Activated CD8-positive, alpha-beta T cell treated with anti-CD3 and anti-CD28 coated beads, Interleukin-2, amount 10 ng/mL, durations not matched to agents 7 days and 5 days (primary cell): ENCODE measurements at regions of chr1 and their contacts with region 1.

Region 1: DNA sequence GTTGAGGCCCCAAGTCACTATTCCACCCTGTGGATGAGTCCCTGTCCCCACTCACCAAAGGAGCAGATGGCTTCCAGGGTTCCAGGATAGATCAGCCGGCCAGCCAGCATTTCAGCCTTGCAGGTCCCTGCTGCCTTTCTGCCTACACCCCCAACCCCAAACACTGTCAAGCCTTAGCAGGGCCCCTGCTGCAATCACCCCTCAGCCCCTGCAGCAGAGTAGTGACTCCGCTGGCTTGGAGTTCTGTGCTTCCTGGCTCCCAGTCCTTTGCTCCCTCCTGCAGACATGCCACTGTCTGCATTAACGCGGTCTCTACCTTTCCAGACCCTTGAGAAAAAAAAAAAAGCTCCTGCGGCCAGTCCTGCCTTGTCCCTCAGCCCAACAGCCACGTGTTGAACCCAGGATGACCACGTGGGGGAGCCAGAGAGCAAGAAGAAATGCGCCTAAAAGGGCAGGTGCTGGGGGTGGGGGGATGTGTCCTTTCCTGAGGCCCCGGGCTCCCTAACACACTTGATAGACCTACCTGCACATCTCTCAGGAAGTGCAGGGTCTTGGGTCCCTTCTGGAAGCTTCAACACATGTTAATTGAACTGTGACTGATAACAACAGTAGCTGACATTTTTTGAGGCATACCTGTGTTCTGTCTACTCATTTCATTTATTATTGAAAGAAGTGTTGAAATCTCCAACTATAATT is 37.4 kb downstream of the RASSF5 start:
- DNase-seq: peak; percentile 85
- ATAC-seq: peak; percentile 81
- H3K4me3 Mint-ChIP-seq: no peak overlapping the region
- H3K27ac Mint-ChIP-seq: peak overlapping the region; percentile 26
- H3K4me1 Mint-ChIP-seq: peaks cover 20% of the 10 kb centered on the region
- H3K27me3 Mint-ChIP-seq: no peaks in the 10 kb centered on the region

Region 2: DNA sequence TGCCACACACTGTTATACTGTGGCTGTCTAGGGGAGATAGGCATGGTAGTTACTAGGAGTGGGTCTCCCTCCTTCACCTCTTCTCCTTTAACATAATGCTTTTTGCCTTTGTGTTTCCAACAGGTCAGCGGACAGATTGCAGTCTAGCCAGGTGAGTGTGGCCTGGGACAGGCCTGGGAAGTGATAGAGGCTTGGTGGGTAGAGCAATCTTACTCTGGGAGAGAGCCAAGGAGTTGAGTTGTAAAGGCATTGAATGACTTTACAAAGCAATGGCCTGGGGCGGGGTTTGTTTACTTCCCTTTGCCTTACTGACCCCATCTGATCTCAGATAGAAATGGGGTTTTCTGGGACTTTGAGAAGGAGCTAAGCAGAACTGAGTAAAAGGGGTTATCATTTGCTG is 125.5 kb before region 1 on chr1:
- CTCF ChIA-PET with region 1: no interaction called
- POLR2A ChIA-PET with region 1: no interaction called
- DNase-seq: no peak
- ATAC-seq: no peak
- H3K4me3 Mint-ChIP-seq: no peak overlapping the region
- H3K27ac Mint-ChIP-seq: no peak overlapping the region
- H3K4me1 Mint-ChIP-seq: no peaks in the 10 kb centered on the region
- H3K27me3 Mint-ChIP-seq: no peaks in the 10 kb centered on the region

Region 3: GRCh38 chr1:206461602-206462455 is 82.9 kb before region 1 on chr1:
- CTCF ChIA-PET with region 1: interaction called, 12 read pairs
- POLR2A ChIA-PET with region 1: no interaction called
- DNase-seq: peak; percentile 88
- ATAC-seq: peak; percentile 73
- H3K4me3 Mint-ChIP-seq: no peak overlapping the region
- H3K27ac Mint-ChIP-seq: no peak overlapping the region
- H3K4me1 Mint-ChIP-seq: peaks cover 43% of the 10 kb centered on the region
- H3K27me3 Mint-ChIP-seq: no peaks in the 10 kb centered on the region

Region 4: GRCh38 chr1:206479183-206480125 is 65.3 kb before region 1 on chr1:
- CTCF ChIA-PET with region 1: interaction called, 10 read pairs
- POLR2A ChIA-PET with region 1: no interaction called
- DNase-seq: peak; percentile 80
- ATAC-seq: peak; percentile 73
- H3K4me3 Mint-ChIP-seq: no peak overlapping the region
- H3K27ac Mint-ChIP-seq: peak overlapping the region; percentile 55
- H3K4me1 Mint-ChIP-seq: peaks cover 18% of the 10 kb centered on the region
- H3K27me3 Mint-ChIP-seq: no peaks in the 10 kb centered on the region

Region 5: GRCh38 chr1:206521694-206522402 is 22.9 kb before region 1 on chr1:
- CTCF ChIA-PET with region 1: interaction called, 13 read pairs
- POLR2A ChIA-PET with region 1: no interaction called
- DNase-seq: no peak
- ATAC-seq: peak; percentile 29
- H3K4me3 Mint-ChIP-seq: no peak overlapping the region
- H3K27ac Mint-ChIP-seq: no peak overlapping the region
- H3K4me1 Mint-ChIP-seq: peaks cover 4% of the 10 kb centered on the region
- H3K27me3 Mint-ChIP-seq: no peaks in the 10 kb centered on the region

Region 6: DNA sequence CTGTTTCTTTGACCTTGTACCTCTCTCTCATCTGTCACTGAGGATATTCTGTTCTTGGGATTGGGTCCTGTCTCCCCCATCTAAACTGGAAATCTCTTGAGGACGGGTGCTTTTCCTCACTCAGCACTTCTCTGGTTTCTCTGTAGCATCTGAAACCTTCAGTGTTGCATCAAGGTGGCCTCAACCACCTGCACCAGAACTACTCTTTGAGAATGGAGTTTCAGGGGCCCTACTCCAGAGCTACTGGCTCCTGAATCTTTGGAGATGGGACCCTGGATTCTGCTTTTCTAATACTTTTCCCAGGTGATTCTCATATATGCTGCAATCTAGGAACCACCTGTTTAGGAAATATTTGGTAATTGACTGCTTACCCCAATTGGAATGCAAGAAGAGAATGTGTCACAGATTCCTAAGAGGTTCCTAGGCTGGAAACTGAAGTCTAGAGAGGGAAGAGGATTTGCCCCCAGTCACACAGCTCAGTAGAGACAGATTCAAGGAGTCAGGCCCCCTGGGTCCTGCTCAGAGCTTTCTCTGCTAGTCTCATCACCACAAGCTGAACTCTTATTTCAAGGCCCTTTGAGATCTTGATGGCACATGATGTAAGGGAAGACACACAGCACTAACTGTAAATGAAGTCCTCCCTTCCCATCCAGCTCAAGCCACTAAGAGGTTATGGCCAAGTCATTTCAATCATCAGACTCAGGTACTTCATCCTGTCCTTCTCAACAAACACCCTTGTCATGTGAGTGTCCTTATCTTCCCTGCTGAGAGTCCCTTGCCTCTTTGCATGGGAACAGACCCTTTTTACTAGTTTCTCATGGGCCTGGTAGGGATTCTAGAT is 18.9 kb after region 1 on chr1:
- CTCF ChIA-PET with region 1: interaction called, 175 read pairs
- POLR2A ChIA-PET with region 1: interaction called, 8 read pairs
- DNase-seq: no peak
- ATAC-seq: peak; percentile 14
- H3K4me3 Mint-ChIP-seq: peak overlapping the region; percentile 62
- H3K27ac Mint-ChIP-seq: peak overlapping the region; percentile 90
- H3K4me1 Mint-ChIP-seq: peaks cover 88% of the 10 kb centered on the region
- H3K27me3 Mint-ChIP-seq: no peaks in the 10 kb centered on the region

Region 7: DNA sequence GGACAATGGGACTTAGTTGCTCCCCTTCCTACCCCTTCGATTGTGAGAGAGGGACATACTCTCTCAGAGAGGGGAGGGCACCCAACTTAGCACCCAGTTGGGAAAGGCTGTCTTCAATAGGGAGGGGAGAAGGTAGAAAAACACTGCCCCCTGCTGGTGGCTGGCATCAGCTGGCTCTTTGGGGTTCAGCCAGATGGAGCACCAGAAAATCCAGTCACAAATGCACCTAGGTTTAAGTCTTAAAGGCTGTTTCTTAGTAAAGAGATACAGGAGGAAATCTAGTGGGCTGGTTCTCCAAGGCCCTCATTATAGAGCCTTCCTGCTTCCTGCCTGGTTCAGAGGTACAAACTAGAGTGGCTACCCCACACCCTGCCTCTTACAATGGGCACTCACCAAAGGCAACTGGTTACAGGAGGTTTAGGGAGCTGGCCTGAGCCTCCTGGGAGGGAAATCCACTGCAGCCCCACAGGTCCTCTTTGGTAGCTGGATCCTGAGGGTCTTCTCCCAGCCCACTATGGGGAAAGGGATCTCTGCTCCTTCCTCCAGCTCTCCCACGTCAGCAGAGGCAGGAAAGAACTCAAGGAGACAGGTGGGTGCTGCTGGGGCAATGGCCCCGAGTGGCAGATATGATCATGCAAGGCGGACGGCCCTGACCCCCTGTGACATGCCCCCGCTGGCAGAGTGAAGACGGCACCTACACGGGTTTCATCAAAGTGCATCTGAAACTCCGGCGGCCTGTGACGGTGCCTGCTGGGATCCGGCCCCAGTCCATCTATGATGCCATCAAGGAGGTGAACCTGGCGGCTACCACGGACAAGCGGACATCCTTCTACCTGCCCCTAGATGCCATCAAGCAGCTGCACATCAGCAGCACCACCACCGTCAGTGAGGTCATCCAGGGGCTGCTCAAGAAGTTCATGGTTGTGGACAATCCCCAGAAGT is 39.3 kb after region 1 on chr1:
- CTCF ChIA-PET with region 1: interaction called, 728 read pairs
- POLR2A ChIA-PET with region 1: interaction called, 276 read pairs
- DNase-seq: peak; percentile 90
- ATAC-seq: peak; percentile 18
- H3K4me3 Mint-ChIP-seq: peak overlapping the region; percentile 54
- H3K27ac Mint-ChIP-seq: peak overlapping the region; percentile 91
- H3K4me1 Mint-ChIP-seq: peaks cover 92% of the 10 kb centered on the region
- H3K27me3 Mint-ChIP-seq: no peaks in the 10 kb centered on the region

Region 8: GRCh38 chr1:206612129-206612876 is 67.6 kb after region 1 on chr1 and contains the start of gene EIF2D:
- CTCF ChIA-PET with region 1: interaction called, 42 read pairs
- POLR2A ChIA-PET with region 1: interaction called, 4 read pairs
- DNase-seq: peak; percentile 95
- ATAC-seq: peak; percentile 98
- H3K4me3 Mint-ChIP-seq: peak within 1 kb of the TSS; percentile 94
- H3K27ac Mint-ChIP-seq: peak within 1 kb of the TSS; percentile 90
- H3K4me1 Mint-ChIP-seq: peaks cover 35% of the 10 kb centered on the region
- H3K27me3 Mint-ChIP-seq: peaks cover 10% of the 10 kb centered on the region
- total RNA-seq, gene EIF2D: 41.6 to 45.1 TPM